ENCODE measurements at regions of chr3 and their contacts with region 1.

Region 1: DNA sequence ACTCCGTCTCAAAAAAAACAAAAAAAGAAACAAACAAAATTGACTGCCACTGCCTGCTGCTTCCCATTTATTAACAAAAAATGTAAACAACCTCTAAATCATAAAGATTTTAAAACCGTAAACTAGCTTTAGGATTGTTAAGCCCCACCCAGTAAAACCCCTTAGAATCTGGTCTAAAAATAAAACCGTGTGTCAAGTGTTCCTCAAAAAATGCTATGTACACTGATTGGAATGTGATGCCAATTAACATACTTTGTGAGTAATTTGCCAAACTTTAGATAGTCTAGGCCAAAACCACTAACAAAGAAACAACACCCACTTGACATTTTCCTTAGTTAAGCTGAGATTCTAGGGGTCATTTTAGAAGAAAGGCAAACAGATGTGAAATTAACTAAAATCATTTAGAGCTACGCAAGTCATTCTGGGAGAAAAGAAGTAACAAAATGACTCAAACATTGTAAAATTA is 5.3 kb downstream of the RAF1 start:
- DNase-seq: no peak
- ATAC-seq: no peak
- H3K4me3 ChIP-seq: no peak overlapping the region
- H3K27ac ChIP-seq: no peak overlapping the region
- H3K4me1 ChIP-seq: peaks cover 17 to 49% (median 20%) of the 10 kb centered on the region in 3 donors
- H3K27me3 ChIP-seq: no peaks in the 10 kb centered on the region
- CTCF ChIP-seq: no peak

Region 2: DNA sequence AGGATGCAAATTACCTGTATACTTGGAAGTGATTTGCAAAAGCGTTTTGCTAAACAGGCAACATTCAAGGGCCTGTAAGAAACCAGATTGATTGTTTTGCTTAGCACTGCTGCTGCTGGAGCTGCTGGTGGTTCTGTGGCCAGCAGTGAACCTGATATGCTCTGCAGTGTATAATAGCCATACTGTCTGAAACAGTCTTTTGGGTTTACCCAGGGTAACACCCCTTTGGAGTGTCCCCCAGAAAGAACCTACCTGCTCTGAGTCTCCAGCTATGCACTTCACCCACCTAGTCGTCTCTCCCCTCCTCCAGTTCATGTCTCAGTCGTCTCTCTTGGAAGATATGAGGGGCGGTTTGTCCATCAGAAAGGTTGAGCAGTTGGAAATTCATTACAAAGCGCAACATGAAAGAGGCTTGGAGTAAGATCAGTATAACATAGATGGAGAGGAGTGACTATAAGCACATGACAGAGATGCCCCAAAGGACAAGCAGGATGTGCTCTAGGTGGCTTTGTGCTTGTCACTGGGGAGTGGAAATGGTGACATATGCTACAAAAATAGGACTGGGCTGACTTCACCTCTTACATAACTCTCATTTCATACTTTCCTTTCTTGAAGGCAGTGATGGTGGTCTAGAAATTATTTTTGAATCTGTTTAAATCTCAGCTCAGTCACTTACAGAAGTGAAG is 98.0 kb before region 1 on chr3:
- intact Hi-C with region 1: loop called in 1 of 3 experiments (anchors 10 kb)
- DNase-seq: no peak
- ATAC-seq: no peak
- H3K4me3 ChIP-seq: no peak overlapping the region
- H3K27ac ChIP-seq: no peak overlapping the region
- H3K4me1 ChIP-seq: peaks cover 24 to 39% (median 31%) of the 10 kb centered on the region in 3 donors
- H3K27me3 ChIP-seq: no peaks in the 10 kb centered on the region
- CTCF ChIP-seq: no peak

Region 3: DNA sequence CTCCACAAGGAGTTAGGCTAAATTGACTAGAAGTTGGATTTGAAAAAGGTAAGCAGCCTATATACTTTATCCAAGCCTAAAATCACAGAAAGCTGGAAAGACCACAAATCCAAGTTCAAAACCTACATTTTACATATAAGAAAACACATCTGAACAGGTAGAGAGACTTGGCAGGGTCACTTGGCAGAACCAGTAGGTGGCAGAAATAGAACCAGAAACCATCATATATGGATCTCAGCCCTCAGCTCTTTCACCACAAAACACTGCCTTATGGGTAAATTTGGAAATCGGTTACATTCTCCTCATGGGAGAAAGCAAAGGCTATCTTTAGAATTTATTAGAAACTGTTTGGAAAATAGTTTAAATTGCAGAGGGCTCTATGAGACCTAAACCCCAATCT is 57.6 kb before region 1 on chr3:
- intact Hi-C with region 1: loop called in 1 of 3 experiments (anchors 10 kb)
- DNase-seq: no peak
- ATAC-seq: peak in 3 of 4 donors; percentile 25 to 58 (median 45)
- H3K4me3 ChIP-seq: no peak overlapping the region
- H3K27ac ChIP-seq: no peak overlapping the region
- H3K4me1 ChIP-seq: peaks cover 0 to 11% (median 8%) of the 10 kb centered on the region in 3 donors
- H3K27me3 ChIP-seq: no peaks in the 10 kb centered on the region
- CTCF ChIP-seq: no peak

Measured in pancreas (tissue), 10 donors.